ENCODE measurements at regions of chr3 and their contacts with region 1.

Region 1: DNA sequence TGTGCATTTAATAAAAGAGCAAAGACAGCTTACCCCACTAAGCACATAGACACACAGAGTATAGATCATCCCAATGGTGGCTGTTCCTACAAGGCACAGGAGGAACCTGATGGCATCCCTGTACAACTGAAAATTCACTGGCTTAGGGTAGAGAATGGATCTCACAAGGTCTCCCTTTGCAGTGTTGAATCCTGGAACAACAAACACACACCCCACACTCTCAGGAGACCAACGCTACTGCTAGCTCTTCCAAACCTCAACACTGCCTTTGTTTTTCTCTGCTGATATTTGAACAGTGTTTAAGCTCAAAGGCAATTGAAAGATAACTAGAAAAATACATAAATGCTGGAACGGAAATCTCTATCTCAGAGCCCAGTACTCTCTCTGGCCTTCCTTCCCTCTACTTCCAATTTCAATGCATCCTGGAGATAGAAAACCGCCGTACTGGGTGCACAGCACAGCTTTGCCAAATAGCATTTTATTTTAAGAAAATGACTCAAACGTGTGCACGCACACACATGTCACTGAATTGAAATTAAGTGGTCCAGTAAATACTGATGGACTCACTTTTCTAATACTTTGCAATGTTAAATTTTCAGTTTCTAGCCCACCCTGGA is 87.5 kb upstream of the ATP13A5 start:
- DNase-seq: no peak
- ATAC-seq: no peak
- H3K4me3 ChIP-seq: no peak overlapping the region
- H3K27ac ChIP-seq: no peak overlapping the region
- H3K4me1 ChIP-seq: peaks cover 0 to 8% of the 10 kb centered on the region in 2 donors
- H3K27me3 ChIP-seq: no peaks in the 10 kb centered on the region
- CTCF ChIP-seq: no peak

Region 2: DNA sequence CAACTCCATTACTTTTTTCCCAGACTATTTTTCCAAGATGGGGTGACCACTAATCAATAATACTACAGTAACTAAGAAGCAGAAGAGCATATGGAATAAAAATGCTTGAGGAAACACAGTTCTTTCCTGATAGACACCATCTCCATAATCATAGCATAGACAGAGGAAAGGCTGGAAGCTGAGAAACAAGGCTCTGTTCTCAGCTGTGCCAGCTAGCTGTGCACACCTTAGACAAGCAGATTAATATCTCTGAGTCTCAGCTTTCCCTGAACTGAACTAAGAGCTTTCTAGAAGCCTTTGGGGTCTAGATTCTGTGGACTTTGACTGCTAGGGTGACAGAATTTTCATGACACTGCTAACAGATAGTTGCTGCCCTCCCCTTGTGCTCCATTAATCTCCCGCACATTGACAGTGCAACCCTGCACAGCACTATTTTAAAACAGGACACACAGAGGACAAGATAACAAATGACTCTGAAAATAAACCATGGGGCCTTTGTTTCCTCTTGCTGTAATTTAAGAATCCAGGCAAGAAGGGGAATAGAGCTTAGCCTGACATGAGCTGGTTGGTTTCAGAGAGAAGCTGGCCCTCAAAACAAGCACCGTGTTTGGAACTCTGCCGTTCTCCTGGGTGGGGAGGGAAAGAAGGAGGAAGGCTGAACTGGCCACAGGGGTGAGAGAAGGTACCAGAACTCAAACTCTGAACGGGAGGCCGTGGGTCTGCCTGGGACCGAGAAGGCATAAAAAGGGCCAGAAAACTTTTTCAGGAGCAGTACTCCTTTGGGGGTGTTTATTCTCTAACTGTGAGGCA is 155.0 kb before region 1 on chr3:
- intact Hi-C with region 1: no loop called
- DNase-seq: no peak
- ATAC-seq: no peak
- H3K4me3 ChIP-seq: no peak overlapping the region
- H3K27ac ChIP-seq: no peak overlapping the region
- H3K4me1 ChIP-seq: no peaks in the 10 kb centered on the region
- H3K27me3 ChIP-seq: no peaks in the 10 kb centered on the region
- CTCF ChIP-seq: no peak

Region 3: DNA sequence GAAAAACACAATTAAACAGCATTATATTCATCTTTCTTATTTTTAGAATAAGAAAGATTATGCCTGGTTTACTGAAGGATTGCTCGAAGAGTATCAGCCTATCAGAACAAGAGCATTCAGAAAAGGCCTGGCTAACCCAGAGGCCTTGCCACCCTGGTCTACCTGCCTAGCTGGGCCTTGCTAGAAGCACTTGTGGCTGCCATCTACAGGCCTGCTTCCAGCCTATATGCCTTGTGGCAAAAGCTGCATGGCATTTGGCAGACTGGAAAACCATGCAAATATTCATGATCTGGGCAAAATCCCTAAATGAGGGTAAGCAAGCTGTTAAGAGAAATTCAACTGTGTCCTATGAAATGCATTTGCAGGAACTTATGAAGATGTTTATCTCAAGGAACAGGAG is 97.9 kb after region 1 on chr3:
- intact Hi-C with region 1: loop called in 1 of 2 experiments (anchors 10 kb)
- DNase-seq: peak in 1 of 4 donors; percentile 53
- ATAC-seq: peak; percentile 95
- H3K4me3 ChIP-seq: no peak overlapping the region
- H3K27ac ChIP-seq: no peak overlapping the region
- H3K4me1 ChIP-seq: no peaks in the 10 kb centered on the region
- H3K27me3 ChIP-seq: no peaks in the 10 kb centered on the region
- CTCF ChIP-seq: peak in 1 of 2 donors; percentile 17

Measured in left lung (tissue), 14 donors.